PC-3 (cell line): ENCODE measurements at regions of chr6 and their contacts with region 1.

Region 1: GRCh38 chr6:12289933-12290820 is at the start of gene EDN1:
- DNase-seq: peak; percentile 85
- ATAC-seq: peak; percentile 61
- H3K4me3 ChIP-seq: peak within 1 kb of the TSS; percentile 77
- H3K27ac ChIP-seq: peak within 1 kb of the TSS; percentile 86
- H3K4me1 ChIP-seq: peaks cover 70% of the 10 kb centered on the region
- H3K27me3 ChIP-seq: no peaks in the 10 kb centered on the region
- CTCF ChIP-seq: peak; percentile 45; the same call in 1 of the 2 replicates
- total RNA-seq, gene EDN1: 21.9 and 25.6 TPM in 2 replicates

Region 2: DNA sequence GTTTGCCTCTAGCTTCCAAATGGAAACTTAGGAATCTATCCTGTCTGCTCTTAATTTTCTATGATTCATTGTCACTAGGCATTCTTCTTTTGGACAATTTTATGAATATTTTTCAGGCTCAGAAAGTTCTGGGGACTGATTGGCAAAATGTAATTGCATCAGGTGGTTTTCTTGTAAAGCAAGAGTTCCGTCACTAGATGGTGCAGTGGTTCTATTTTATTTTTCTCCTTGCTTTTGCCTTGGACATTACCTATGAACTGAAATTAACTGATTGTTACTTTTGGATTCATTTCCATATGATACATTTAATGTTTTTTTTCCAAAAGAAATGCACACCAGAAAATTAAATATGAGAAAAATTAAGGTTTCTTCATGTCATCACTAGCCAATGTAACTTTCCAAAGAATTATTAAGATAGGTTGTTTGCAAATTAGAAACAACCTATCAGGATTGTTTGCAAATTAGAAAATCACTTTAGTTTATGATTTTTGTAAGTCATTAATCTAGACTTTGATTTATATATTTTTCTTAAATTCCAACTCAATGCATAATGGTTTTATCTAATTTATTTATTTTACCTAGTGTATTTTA is 704.7 kb before region 1 on chr6:
- CTCF ChIA-PET with region 1: no interaction called
- POLR2A ChIA-PET with region 1: no interaction called
- intact Hi-C with region 1: loop called (anchors 2 kb)
- DNase-seq: peak; percentile 80
- ATAC-seq: peak; percentile 29; the same call in 1 of the 2 replicates
- H3K4me3 ChIP-seq: no peak overlapping the region
- H3K27ac ChIP-seq: no peak overlapping the region
- H3K4me1 ChIP-seq: peaks cover 11% of the 10 kb centered on the region
- H3K27me3 ChIP-seq: no peaks in the 10 kb centered on the region
- CTCF ChIP-seq: peak; percentile 83

Region 3: DNA sequence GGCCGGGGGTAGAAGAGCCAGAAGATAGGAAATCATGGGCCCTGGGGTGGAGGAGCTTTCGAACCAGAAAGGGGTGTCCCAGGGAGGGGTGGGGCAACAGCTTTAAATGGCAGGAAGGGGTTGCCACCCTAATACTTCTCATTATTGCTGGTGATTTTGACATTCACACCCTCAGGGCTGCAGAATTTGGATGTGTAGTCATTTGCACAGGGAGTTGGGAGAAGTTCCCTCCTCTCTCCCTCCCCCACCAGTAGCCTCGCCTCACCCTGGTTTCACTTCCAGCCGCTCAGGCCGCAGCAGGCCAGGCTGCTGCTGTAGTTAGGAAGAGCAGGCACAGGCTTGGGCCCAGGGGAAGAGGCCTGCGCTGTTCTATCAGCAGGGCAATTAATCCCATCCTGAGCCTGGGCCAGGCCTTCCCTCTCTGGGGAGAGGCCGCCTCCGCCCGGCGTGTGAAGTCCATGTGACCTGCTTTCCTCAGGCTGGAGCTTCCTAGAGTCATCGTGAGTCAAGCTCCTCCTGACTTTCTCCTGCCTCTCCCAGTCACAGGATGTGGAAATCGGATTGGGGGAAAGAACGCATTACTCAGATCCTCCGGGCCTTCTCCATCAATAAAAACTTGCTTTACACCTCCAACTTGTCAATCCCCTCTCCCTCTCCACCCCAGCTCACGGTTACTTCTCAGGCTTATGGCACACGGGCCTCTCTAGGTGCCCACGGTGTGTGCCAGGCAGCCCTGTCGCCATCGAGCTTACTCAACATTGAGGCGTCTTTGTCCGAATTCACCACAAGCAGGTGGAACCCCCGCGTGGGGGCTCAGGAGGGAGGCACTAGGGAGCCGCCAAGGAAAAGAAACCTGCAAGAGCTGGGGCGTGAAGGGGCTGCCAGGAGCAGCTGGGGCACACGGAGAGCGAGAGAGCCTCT is 519.4 kb before region 1 on chr6:
- CTCF ChIA-PET with region 1: no interaction called
- POLR2A ChIA-PET with region 1: interaction called, 10 read pairs
- intact Hi-C with region 1: no loop called
- DNase-seq: peak; percentile 98
- ATAC-seq: peak; percentile 83
- H3K4me3 ChIP-seq: peak overlapping the region; percentile 29; the same call in 1 of the 2 replicates
- H3K27ac ChIP-seq: peak overlapping the region; percentile 97
- H3K4me1 ChIP-seq: peaks cover 71% of the 10 kb centered on the region
- H3K27me3 ChIP-seq: no peaks in the 10 kb centered on the region
- CTCF ChIP-seq: no peak

Region 4: DNA sequence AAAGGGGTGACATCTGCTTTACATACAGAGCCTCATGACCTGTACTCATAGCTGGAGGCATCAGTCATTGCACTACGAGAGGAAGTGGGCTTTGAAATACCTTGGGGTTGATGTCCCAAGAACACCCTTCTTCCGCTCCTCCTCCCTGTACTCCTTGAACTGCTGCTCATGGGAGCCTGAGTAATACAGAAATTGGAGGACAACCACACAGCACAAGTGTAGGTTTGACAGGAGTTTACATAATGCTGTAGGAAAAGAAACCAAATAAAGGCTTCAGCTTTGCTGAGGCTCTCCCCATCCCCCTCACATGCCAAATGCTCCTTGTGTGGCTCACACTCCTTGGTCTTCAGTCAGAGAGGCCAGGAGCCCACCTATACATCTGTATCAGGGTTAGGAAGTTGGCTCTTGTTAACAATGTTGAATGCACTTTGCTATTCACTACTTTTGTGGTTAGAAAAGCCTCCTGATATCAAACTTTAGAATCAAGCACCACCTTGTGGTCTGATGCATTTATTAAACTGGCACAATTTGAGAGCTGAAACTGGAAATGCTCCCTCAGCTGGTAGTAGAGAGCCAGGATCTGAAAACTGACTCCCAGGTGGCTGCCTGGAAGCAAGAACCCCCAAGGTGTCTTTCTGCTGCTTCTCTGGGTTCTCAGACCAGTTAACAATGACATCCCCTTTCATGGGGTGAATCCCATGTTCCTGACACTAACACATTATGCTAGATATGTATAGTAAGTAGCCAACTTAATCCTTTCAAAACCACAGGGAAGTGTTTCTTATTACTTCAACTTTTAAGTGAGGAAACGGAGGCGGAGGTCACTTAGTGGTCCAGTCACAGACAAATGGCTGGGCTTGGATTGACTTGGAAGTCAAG is 56.2 kb before region 1 on chr6:
- CTCF ChIA-PET with region 1: interaction called, 5 read pairs
- POLR2A ChIA-PET with region 1: no interaction called
- intact Hi-C with region 1: loop called (anchors 1 kb)
- DNase-seq: peak; percentile 90
- ATAC-seq: peak; percentile 94
- H3K4me3 ChIP-seq: no peak overlapping the region
- H3K27ac ChIP-seq: no peak overlapping the region
- H3K4me1 ChIP-seq: peaks cover 10% of the 10 kb centered on the region
- H3K27me3 ChIP-seq: no peaks in the 10 kb centered on the region
- CTCF ChIP-seq: peak; percentile 97

Region 5: GRCh38 chr6:12331956-12332749 is 42.0 kb after region 1 on chr6:
- CTCF ChIA-PET with region 1: interaction called, 12 read pairs
- POLR2A ChIA-PET with region 1: interaction called, 9 read pairs
- intact Hi-C with region 1: no loop called
- DNase-seq: peak; percentile 53
- ATAC-seq: peak; percentile 9; the same call in 1 of the 2 replicates
- H3K4me3 ChIP-seq: no peak overlapping the region
- H3K27ac ChIP-seq: peak overlapping the region; percentile 48
- H3K4me1 ChIP-seq: peaks cover 58% of the 10 kb centered on the region
- H3K27me3 ChIP-seq: no peaks in the 10 kb centered on the region
- CTCF ChIP-seq: no peak

Region 6: GRCh38 chr6:12490904-12491571 is 200.9 kb after region 1 on chr6:
- CTCF ChIA-PET with region 1: interaction called, 9 read pairs
- POLR2A ChIA-PET with region 1: interaction called, 4 read pairs
- intact Hi-C with region 1: loop called (anchors 2 kb)
- DNase-seq: peak; percentile 94
- ATAC-seq: peak; percentile 72
- H3K4me3 ChIP-seq: no peak overlapping the region
- H3K27ac ChIP-seq: peak overlapping the region; percentile 84
- H3K4me1 ChIP-seq: peaks cover 33% of the 10 kb centered on the region
- H3K27me3 ChIP-seq: no peaks in the 10 kb centered on the region
- CTCF ChIP-seq: no peak